Heart right ventricle (tissue), 16 donors: ENCODE measurements at regions of chr2 and their contacts with region 1.

Region 1: GRCh38 chr2:3728104-3729054 is 25.0 kb downstream of the DCDC2C start:
- DNase-seq: peak in 1 of 2 donors; percentile 37
- ATAC-seq: peak in 7 of 8 donors; percentile 16 to 78 (median 48)
- H3K4me3 ChIP-seq: peak overlapping the region in 3 of 10 donors; percentile 8 to 34 (median 25)
- H3K27ac ChIP-seq: no peak overlapping the region
- H3K4me1 ChIP-seq: peaks cover 0 to 13% (median 7%) of the 10 kb centered on the region in 9 donors
- H3K27me3 ChIP-seq: peaks cover 0 to 32% (median 18%) of the 10 kb centered on the region in 7 donors
- CTCF ChIP-seq: peak; percentile 29 to 70 (median 62)

Region 2: GRCh38 chr2:3672861-3673678 is 55.3 kb before region 1 on chr2:
- intact Hi-C with region 1: no loop called
- DNase-seq: no peak
- ATAC-seq: no peak
- H3K4me3 ChIP-seq: no peak overlapping the region
- H3K27ac ChIP-seq: no peak overlapping the region
- H3K4me1 ChIP-seq: no peaks in the 10 kb centered on the region
- H3K27me3 ChIP-seq: peaks cover 0 to 17% (median 2%) of the 10 kb centered on the region in 7 donors
- CTCF ChIP-seq: no peak

Region 3: GRCh38 chr2:3692381-3692780 is 36.0 kb before region 1 on chr2:
- intact Hi-C with region 1: no loop called
- DNase-seq: no peak
- ATAC-seq: no peak
- H3K4me3 ChIP-seq: no peak overlapping the region
- H3K27ac ChIP-seq: no peak overlapping the region
- H3K4me1 ChIP-seq: no peaks in the 10 kb centered on the region
- H3K27me3 ChIP-seq: peaks cover 0 to 30% (median 4%) of the 10 kb centered on the region in 7 donors
- CTCF ChIP-seq: peak in 5 of 9 donors; percentile 18 to 44 (median 38)

Region 4: GRCh38 chr2:3703753-3704355 is 24.5 kb before region 1 on chr2:
- intact Hi-C with region 1: no loop called
- DNase-seq: no peak
- ATAC-seq: peak in 1 of 8 donors; percentile 12
- H3K4me3 ChIP-seq: peak overlapping the region in 2 of 10 donors; percentile 10 to 11
- H3K27ac ChIP-seq: no peak overlapping the region
- H3K4me1 ChIP-seq: peaks cover 0 to 5% (median 0%) of the 10 kb centered on the region in 9 donors
- H3K27me3 ChIP-seq: peaks cover 9 to 65% (median 43%) of the 10 kb centered on the region in 7 donors
- CTCF ChIP-seq: no peak

Region 5: DNA sequence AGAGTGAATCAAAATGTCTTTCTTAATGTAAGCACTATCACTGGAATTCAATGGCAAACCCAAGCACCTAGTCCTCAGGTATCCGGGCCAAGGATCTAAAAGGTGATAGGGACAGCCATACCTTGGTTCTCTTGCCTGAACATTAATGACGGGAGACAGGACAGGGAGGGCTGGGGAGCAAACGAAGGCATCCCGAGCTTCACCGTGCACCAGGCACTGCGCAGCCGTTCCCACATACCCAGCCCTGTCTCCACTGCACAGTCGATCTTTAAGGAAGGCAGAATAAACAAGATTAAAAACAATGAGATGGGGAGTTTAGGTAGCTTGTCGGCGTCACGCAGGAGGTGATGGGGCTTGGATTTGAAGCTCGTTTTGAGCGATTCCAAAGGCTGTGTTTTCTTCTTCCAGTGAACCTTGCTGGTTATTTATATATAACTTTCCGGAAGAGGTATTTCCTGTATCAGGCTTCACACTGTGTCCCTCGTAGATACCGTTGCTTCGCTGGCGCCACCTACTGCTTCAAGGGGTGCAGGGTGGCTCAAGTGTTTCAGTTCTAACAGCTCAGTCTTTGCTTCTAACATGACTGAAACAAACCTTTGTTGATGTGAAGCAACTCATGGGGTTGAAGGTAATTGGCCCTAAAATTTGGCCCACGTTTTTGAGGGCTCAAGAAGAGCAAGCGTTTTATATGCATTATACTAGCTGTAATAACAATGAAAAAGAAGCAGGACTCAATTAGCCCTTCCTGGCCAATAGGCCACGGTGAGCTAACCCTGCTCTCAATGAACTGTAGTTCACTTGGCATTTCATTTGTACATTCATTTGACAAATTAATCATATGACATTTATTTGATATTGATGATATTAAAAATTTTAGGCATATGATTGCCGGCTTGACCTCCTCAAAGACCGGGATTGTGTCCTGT is 52.4 kb after region 1 on chr2:
- intact Hi-C with region 1: loop called in 6 of 10 experiments (anchors 2 to 5 kb)
- DNase-seq: peak; percentile 54 to 56
- ATAC-seq: peak in 7 of 8 donors; percentile 75 to 93 (median 86)
- H3K4me3 ChIP-seq: peak overlapping the region in 4 of 10 donors; percentile 13 to 21 (median 21)
- H3K27ac ChIP-seq: peak overlapping the region in 1 of 10 donors; percentile 15
- H3K4me1 ChIP-seq: peaks cover 0 to 16% (median 13%) of the 10 kb centered on the region in 9 donors
- H3K27me3 ChIP-seq: peaks cover 0 to 36% (median 0%) of the 10 kb centered on the region in 7 donors
- CTCF ChIP-seq: peak; percentile 38 to 80 (median 67)

Region 6: DNA sequence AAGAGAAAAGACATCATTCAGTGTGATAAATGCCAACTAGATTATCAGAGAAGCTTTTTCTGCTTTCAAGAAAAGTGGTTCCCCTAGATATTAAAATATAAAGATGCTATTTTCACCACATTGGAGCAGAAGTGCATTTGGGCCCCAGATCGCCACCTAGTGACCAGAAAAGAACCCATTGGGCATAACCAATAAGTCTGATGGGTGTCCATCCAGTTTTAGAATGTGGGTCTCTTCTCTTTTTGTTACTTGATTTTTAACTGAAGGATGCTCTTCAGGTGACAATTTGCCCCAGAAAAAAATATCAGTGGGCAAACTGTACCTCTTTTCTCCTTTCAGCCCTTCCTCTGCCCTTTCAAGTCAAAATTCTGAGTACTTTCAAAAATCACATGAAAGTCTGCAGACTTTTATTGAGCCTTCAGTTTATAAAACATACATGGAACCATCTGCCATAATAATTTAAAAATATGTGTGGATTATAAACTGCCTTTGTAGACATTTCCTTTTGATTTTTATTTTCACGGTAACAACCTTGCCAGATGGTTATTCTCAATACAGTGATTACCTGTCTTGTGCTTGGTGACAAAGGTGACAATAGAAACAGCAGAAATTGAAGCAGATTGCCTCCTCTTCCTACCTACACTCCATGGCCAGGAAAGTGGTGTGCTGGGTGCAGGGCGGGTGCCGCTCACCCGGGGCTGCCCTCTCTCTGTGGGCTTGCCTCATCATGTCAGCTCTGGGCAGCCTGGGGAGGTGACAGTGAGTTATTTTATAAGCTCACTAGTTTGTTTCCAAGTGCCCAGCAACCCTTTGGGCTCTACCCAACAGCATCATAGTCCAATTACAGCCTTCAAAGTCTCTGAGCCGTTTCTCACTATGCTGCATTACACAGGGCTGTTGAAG is 99.5 kb after region 1 on chr2:
- intact Hi-C with region 1: loop called in 3 of 10 experiments (anchors 2 to 5 kb)
- DNase-seq: peak in 1 of 2 donors; percentile 9
- ATAC-seq: peak in 2 of 8 donors; percentile 39 to 51
- H3K4me3 ChIP-seq: no peak overlapping the region
- H3K27ac ChIP-seq: no peak overlapping the region
- H3K4me1 ChIP-seq: no peaks in the 10 kb centered on the region
- H3K27me3 ChIP-seq: peaks cover 0 to 2% (median 0%) of the 10 kb centered on the region in 7 donors
- CTCF ChIP-seq: peak in 8 of 9 donors; percentile 30 to 62 (median 59)

Region 7: DNA sequence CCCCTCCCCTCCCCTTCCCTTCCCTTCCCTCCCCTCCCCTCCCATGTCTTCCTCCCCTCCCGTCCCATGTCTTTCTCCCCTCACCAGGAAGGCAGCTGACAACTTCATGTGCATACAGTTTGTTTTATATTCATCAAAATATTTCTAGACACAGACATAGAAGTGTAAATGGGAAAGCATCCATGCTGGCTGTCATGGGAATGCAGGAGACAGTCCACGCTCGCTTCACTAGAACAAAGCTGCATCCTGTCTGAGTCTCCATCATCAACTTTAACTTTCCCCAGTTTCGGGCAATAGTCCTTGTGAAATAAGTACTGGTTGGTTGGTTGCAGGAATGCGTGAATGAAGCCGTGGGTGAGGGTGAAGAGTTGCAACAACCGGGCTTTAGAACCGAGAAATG is 201.9 kb after region 1 on chr2:
- intact Hi-C with region 1: no loop called
- DNase-seq: no peak
- ATAC-seq: no peak
- H3K4me3 ChIP-seq: no peak overlapping the region
- H3K27ac ChIP-seq: no peak overlapping the region
- H3K4me1 ChIP-seq: no peaks in the 10 kb centered on the region
- H3K27me3 ChIP-seq: no peaks in the 10 kb centered on the region
- CTCF ChIP-seq: no peak